Naive thymus-derived CD8-positive, alpha-beta T cell (primary cell): ENCODE measurements at regions of chr2 and their contacts with region 1.

Region 1: DNA sequence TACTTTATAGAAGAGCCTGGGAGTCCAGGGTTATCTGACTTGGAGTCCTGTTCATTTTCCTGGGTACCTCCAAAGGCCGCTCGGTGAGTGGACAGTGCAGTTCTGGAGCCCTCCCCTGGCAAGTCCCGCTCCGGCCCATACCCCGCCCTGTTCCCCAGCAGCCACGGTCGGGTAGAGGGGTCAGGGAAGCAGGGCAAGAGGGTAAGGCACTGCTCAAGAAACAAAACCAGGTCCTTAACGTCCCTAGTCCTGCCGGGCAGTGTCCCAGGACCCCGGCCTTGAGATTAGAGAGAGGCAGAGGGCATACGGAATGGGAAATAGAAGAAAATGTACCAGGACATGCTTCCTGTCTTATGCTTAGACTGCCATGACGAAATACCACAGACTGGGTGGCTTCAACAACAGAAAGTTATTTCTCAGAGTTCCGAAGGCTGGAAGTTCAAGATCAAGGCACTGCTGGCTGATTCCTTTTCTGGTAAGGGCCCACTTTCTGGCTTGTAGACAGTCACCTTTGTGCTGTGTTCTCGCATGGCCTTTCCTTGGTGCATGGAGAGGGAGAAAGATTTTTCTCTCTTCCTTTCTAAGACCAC is 5.4 kb upstream of the HPCAL1 start:
- DNase-seq: no peak
- ATAC-seq: no peak
- H3K4me3 Mint-ChIP-seq: peak overlapping the region in 4 of 10 donors; percentile 54 to 66 (median 61)
- H3K27ac Mint-ChIP-seq: peak overlapping the region in 6 of 10 donors; percentile 41 to 94 (median 64)
- H3K4me1 Mint-ChIP-seq: peaks cover 18 to 48% (median 47%) of the 10 kb centered on the region in 4 donors
- H3K27me3 Mint-ChIP-seq: no peaks in the 10 kb centered on the region

Region 2: DNA sequence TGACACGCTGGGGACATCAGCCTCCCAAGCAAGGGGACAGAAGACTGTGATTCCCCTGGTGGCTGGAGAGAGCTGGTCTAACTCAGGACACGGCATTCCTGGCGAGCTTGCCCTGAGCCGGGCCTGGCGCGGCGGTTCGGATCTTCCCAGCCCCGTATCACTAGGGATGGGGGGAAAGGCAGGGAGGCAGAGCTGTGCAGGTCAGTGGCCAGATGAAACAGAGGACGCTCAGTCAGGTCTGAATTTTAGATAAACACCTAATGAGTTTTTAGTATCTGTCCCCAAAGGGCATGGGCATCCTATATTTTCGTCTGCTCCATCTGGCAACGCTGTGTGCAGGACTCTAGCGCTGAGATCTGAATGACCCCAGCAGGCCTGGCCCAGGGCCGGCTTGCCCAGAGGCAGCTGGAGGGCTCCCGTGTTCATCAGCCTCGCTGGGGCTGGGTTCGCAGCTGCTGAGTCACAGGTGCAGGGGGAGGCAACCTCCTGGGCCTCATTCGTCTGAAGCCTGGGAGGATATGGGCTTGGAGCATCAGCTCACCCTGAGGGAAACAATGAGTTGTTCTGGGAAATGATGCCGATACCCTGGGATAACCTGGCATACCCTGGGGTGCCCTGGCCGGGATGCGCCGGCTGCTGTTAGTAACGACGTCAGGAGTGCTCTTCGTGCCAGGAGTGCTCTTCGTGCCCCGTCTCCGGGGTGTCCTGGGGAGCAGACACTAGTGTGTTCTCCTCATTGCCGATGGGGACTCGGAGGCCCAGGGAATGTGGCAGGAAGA is 42.8 kb before region 1 on chr2:
- POLR2A ChIA-PET with region 1: no interaction called
- DNase-seq: peak in 1 of 10 donors; percentile 45
- ATAC-seq: no peak
- H3K4me3 Mint-ChIP-seq: no peak overlapping the region
- H3K27ac Mint-ChIP-seq: no peak overlapping the region
- H3K4me1 Mint-ChIP-seq: peaks cover 0 to 16% (median under 1%) of the 10 kb centered on the region in 4 donors
- H3K27me3 Mint-ChIP-seq: peaks cover 0 to 10% (median 2%) of the 10 kb centered on the region in 5 donors

Region 3: DNA sequence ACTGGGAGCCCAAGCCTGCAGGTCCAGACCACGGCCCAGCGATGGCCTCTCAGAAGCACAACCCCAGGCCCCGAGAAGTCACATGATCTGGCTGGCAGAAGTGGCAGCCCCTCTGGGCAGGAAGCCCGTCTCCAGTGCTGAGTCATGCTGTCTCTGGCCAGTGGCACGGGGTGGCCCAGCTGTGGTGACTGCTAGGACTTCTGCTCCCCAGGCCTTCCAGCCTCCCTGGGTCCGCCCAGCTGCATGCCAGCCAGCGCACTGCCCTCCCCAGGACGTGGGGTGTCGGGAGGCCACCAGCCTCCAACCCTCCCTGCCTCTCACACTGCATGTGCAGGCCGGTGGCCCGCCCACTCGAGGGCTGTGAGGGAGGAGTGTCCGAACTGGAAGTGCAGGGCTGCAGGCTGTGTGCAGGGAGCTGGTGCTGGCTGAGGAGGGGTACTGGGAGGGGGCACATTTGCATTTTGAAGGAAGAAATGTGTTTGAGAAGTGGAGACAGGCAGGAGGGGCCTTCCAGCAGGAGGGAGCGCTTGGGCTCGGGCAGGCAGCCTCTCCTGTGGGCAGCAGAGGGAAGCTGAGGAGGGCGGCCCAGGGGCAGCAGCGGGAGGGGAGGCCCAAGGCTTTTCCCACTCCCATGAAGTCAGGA is 11.7 kb before region 1 on chr2:
- POLR2A ChIA-PET with region 1: interaction called, 25 read pairs
- DNase-seq: peak in 1 of 10 donors; percentile 45
- ATAC-seq: no peak
- H3K4me3 Mint-ChIP-seq: no peak overlapping the region
- H3K27ac Mint-ChIP-seq: no peak overlapping the region
- H3K4me1 Mint-ChIP-seq: peaks cover 0 to 17% (median under 1%) of the 10 kb centered on the region in 4 donors
- H3K27me3 Mint-ChIP-seq: no peaks in the 10 kb centered on the region